H1 (cell line): ENCODE measurements at regions of chr17 and their contacts with region 1.

Region 1: GRCh38 chr17:44961921-44962350 is 6.2 kb downstream of the C1QL1 start:
- DNase-seq: no peak
- H3K4me3 ChIP-seq: no peak overlapping the region
- H3K27ac ChIP-seq: no peak overlapping the region
- H3K4me1 ChIP-seq: peaks cover 0 to 14% (median 7%) of the 10 kb centered on the region in 4 experiments; a peak in 5 of 7 replicates
- H3K27me3 ChIP-seq: peaks cover 14 to 51% (median 41%) of the 10 kb centered on the region in 4 experiments; a peak in 6 of 7 replicates
- CTCF ChIP-seq: peak; percentile 47 to 57 (median 52)
- EP300 ChIP-seq: no peak
- POLR2A ChIP-seq: no peak
- RAD21 ChIP-seq: peak; percentile 44 to 58; a peak in 3 of 4 replicates

Region 2: DNA sequence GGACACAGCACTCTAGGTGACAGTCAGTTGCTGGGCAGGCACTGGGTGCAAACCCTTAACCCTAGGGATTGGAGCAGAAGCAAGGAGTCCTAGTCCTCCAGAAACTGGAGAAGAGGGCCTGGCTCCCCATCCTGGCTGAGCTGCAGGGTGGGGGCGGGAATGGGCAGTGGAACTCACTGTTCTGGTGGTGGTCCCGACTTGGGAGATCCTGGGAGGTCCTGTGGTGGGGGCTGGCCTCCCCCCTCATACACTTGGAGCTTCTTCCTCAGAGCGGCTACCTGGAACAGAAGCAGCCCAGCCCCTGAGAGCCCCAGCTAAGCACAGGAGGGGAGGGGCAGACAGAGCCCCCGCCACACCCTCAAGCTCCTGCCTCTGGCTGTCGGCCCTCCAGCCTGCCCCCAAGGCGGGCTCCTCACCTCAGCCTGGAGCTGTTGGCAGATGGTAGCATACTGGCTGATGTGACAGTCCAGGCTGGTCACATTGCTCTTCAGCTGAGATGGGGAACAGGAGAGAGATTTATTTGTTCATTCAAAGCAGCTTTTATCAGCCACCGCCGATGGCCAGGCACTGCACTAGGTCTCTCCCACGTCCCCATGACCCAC is 29.3 kb before region 1 on chr17:
- CTCF ChIA-PET with region 1: interaction called, 182 read pairs
- POLR2A ChIA-PET with region 1: interaction called, 5 read pairs
- DNase-seq: no peak
- H3K4me3 ChIP-seq: no peak overlapping the region
- H3K27ac ChIP-seq: no peak overlapping the region
- H3K4me1 ChIP-seq: no peaks in the 10 kb centered on the region
- H3K27me3 ChIP-seq: no peaks in the 10 kb centered on the region
- CTCF ChIP-seq: no peak
- EP300 ChIP-seq: no peak
- POLR2A ChIP-seq: no peak
- RAD21 ChIP-seq: no peak